GM23248 (cell line): ENCODE measurements at regions of chr13 and their contacts with region 1.

Region 1: GRCh38 chr13:26985285-26985878 is 186.2 kb downstream of the USP12 start:
- DNase-seq: peak; percentile 86
- H3K4me3 ChIP-seq: no peak overlapping the region
- H3K27ac ChIP-seq: no peak overlapping the region
- H3K4me1 ChIP-seq: peaks cover 25% of the 10 kb centered on the region
- H3K27me3 ChIP-seq: no peaks in the 10 kb centered on the region

Region 2: DNA sequence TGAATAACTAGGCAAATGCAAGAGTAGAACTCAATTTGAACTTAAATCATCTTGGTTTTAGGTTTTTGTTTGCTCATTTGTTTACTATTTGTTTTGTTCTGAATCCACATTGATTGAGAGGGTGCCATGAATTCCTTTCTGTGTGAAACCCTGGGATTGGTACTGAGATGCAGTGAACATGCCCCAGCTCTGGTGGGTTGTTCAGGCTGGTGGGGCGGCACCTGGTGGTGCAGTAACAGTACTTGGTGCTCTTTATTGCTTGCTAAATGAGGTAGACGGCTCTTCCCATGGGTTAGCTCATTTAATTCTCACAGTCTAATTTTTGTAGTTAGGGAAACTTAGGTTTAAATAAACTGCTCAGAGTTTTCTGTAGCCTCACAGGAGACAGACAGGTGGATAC is 379.5 kb before region 1 on chr13:
- in situ Hi-C with region 1: no loop called
- DNase-seq: no peak
- H3K4me3 ChIP-seq: no peak overlapping the region
- H3K27ac ChIP-seq: no peak overlapping the region
- H3K4me1 ChIP-seq: peaks cover 32% of the 10 kb centered on the region
- H3K27me3 ChIP-seq: no peaks in the 10 kb centered on the region

Region 3: GRCh38 chr13:27043013-27043412 is 57.6 kb after region 1 on chr13:
- in situ Hi-C with region 1: no loop called
- DNase-seq: peak; percentile 99
- H3K4me3 ChIP-seq: peak overlapping the region; percentile 52
- H3K27ac ChIP-seq: peak overlapping the region; percentile 83
- H3K4me1 ChIP-seq: peaks cover 19% of the 10 kb centered on the region
- H3K27me3 ChIP-seq: no peaks in the 10 kb centered on the region

Region 4: DNA sequence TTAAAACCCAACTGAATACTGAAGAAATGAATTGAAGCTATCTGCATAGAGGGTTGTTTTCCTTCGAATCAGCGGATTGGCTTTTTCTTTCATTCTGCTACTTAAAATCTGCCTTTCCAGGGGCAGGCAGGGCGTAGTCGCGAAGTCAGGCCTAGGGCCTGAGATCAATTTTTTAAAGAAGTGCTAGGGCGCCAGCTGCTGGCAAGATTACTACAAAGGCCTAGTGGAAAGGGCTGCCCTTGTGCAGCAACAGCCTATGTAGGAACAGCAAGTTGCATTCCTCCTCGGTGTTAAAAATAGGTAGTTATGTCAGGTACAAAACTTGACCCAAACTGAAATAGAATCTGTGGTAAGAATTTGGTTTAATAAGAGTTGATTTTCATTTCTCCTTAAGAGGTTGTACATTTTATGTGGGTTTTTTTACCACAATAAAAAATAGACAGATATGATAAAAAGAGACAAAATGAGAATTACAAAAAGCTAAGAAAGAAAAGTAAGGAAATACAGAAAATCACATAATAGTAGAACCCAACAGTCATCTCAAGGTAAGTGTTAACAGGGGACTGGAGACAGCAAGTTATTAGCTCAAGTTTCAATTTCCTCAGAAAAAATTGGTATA is 1012.6 kb after region 1 on chr13:
- in situ Hi-C with region 1: loop called (anchors 25 kb)
- DNase-seq: peak; percentile 71
- H3K4me3 ChIP-seq: no peak overlapping the region
- H3K27ac ChIP-seq: no peak overlapping the region
- H3K4me1 ChIP-seq: no peaks in the 10 kb centered on the region
- H3K27me3 ChIP-seq: peaks cover 13% of the 10 kb centered on the region